ENCODE measurements at regions of chr16 and their contacts with region 1.

Region 1: DNA sequence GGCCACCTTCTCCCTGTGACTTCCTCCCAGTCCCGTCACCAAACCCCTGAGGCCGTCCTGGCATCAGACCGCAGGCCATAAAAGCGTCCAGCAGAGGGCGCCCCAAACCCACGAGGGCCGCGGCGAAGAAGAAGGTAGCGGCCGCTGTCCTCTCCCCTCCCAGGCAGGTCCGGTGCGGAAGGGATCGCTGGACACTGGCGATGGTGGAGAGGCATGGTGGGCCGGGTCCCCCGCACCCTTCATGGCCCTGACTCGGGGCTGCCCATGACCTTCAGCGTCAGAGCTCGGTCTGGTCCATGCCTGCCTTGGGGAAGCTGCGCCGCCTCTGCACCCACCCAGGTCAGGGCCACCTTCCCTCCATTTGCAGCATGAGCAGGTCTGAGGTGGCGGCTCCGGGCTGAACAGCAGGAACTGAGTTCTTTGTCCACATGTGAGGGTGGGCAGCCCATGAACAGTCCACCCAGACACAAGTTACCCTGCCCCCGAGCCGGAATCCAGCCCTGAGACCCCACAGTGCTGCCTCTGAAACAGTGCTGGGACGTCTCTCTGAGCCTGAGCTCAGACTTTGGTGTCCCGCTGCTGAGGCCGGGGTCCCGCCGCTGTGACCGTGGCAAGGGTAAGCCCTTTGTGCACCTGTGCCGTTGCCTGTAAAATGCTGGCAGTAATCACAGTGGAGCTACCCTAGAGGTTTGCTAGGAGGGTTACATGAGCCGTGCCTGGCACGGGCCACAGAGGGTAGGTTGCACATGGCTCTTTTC is 40.8 kb upstream of the CMIP start:
- DNase-seq: peak; percentile 79 to 93 (median 86)
- ATAC-seq: peak; percentile 68 to 96 (median 94)
- H3K4me3 ChIP-seq: peak overlapping the region in 8 of 12 donors; percentile 6 to 38 (median 28)
- H3K27ac ChIP-seq: no peak overlapping the region
- H3K4me1 ChIP-seq: peaks cover 0 to 19% (median 10%) of the 10 kb centered on the region in 12 donors
- H3K27me3 ChIP-seq: no peaks in the 10 kb centered on the region
- CTCF ChIP-seq: peak; percentile 91 to 98 (median 95)
- POLR2A ChIP-seq: no peak

Region 2: DNA sequence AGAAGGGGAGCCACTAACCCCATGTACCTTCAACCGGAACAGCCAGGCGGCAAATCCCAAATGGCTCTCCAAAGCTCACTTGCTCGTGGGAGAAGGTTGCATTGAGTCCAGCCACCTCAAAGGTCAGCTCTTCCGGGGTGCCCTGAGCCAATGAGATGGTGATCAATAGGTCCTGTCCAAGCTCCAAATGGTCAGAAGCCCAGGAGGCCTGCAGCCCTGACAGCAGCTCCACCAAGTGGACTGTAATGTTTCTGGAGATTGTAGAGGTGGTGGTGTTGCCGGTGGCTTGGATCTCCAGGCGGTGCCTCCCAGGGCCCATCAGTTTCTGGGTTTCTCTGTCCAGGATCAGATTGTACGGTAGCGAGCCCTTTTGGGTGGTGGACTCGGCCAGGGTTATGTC is 205.2 kb before region 1 on chr16:
- intact Hi-C with region 1: no loop called
- DNase-seq: no peak
- ATAC-seq: no peak
- H3K4me3 ChIP-seq: no peak overlapping the region
- H3K27ac ChIP-seq: no peak overlapping the region
- H3K4me1 ChIP-seq: no peaks in the 10 kb centered on the region
- H3K27me3 ChIP-seq: peaks cover 0 to 13% (median 0%) of the 10 kb centered on the region in 9 donors
- CTCF ChIP-seq: peak in 3 of 12 donors; percentile 8 to 26 (median 11)
- POLR2A ChIP-seq: no peak

Region 3: GRCh38 chr16:81616321-81617055 is 212.7 kb after region 1 on chr16:
- intact Hi-C with region 1: loop called in 8 of 10 experiments (anchors 5 to 10 kb)
- DNase-seq: peak; percentile 70 to 88 (median 76)
- ATAC-seq: peak in 3 of 4 donors; percentile 60 to 82 (median 66)
- H3K4me3 ChIP-seq: peak overlapping the region in 1 of 12 donors; percentile 12
- H3K27ac ChIP-seq: peak overlapping the region in 1 of 12 donors; percentile 78
- H3K4me1 ChIP-seq: peaks cover 7 to 52% (median 39%) of the 10 kb centered on the region in 12 donors
- H3K27me3 ChIP-seq: no peaks in the 10 kb centered on the region
- CTCF ChIP-seq: no peak
- POLR2A ChIP-seq: no peak

Region 4: GRCh38 chr16:81632392-81633146 is 228.8 kb after region 1 on chr16:
- intact Hi-C with region 1: loop called in 3 of 10 experiments (anchors 5 to 10 kb)
- DNase-seq: peak in 1 of 5 donors; percentile 47
- ATAC-seq: peak in 2 of 4 donors; percentile 38 to 50
- H3K4me3 ChIP-seq: no peak overlapping the region
- H3K27ac ChIP-seq: peak overlapping the region in 2 of 12 donors; percentile 1 to 83
- H3K4me1 ChIP-seq: peaks cover 0 to 33% (median 2%) of the 10 kb centered on the region in 12 donors
- H3K27me3 ChIP-seq: no peaks in the 10 kb centered on the region
- CTCF ChIP-seq: no peak
- POLR2A ChIP-seq: no peak

Region 5: GRCh38 chr16:81723098-81723723 is 319.4 kb after region 1 on chr16:
- intact Hi-C with region 1: loop called (anchors 1 to 5 kb)
- DNase-seq: peak in 2 of 5 donors; percentile 34 to 51
- ATAC-seq: peak; percentile 91 to 97 (median 94)
- H3K4me3 ChIP-seq: no peak overlapping the region
- H3K27ac ChIP-seq: no peak overlapping the region
- H3K4me1 ChIP-seq: peaks cover 0 to 8% (median 0%) of the 10 kb centered on the region in 12 donors
- H3K27me3 ChIP-seq: peaks cover 0 to 8% (median 0%) of the 10 kb centered on the region in 9 donors
- CTCF ChIP-seq: peak; percentile 60 to 87 (median 75)
- POLR2A ChIP-seq: no peak

Region 6: GRCh38 chr16:81737885-81738786 is 334.3 kb after region 1 on chr16:
- intact Hi-C with region 1: loop called in 1 of 10 experiments (anchors 5 kb)
- DNase-seq: peak; percentile 79 to 83 (median 82)
- ATAC-seq: peak; percentile 89 to 96 (median 93)
- H3K4me3 ChIP-seq: peak overlapping the region in 10 of 12 donors; percentile 2 to 44 (median 29)
- H3K27ac ChIP-seq: peak overlapping the region in 5 of 12 donors; percentile 20 to 52 (median 33)
- H3K4me1 ChIP-seq: peaks cover 0 to 14% (median 4%) of the 10 kb centered on the region in 12 donors
- H3K27me3 ChIP-seq: peaks cover 0 to 2% (median 0%) of the 10 kb centered on the region in 9 donors
- CTCF ChIP-seq: peak; percentile 75 to 91 (median 82)
- POLR2A ChIP-seq: no peak

Measured in heart left ventricle (tissue), 16 donors.